Stomach (tissue), 19 donors: ENCODE measurements at regions of chr11 and their contacts with region 1.

Region 1: DNA sequence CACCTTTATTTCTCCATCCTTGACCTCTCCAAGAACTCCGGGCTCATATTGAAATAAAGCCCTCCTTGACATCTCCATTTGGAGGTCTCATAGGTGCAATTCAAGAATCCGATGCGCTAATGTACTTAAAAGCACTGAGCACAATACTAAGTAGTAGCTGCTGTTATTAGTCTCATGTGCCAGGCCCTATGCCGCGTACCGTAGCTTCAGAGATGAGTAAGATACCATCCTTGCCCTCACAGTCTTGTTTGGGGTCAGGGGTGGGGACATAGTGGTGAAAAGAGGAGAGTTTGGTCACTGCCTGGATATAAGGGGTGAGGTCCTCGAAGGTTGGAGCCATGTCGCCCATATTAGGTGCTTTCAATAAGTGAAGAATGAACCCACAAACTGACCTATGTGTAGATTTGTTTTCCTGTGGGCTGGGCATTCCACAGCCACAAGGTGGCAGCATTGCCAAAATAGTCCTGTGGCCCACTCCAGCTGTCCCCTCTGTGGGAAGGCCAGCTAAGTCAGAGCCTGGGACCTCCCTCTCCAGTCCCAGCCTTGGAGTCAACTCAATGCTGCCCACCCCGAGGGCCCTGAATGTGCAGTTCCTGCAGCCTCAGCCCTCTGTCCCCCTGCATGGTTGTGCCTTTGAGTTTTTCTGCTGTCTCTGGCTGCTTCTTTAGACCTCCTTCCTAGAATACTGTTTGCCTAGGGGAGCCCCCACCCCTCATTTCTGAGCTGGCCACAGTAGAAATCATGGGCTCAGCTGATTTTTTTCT is 6.5 kb downstream of the DCPS start:
- DNase-seq: peak; percentile 74 to 91
- H3K4me3 ChIP-seq: no peak overlapping the region
- H3K27ac ChIP-seq: peak overlapping the region in 2 of 5 donors; percentile 17 to 61
- H3K4me1 ChIP-seq: peaks cover 9 to 39% (median 14%) of the 10 kb centered on the region in 4 donors
- H3K27me3 ChIP-seq: no peaks in the 10 kb centered on the region
- CTCF ChIP-seq: peak in 5 of 7 experiments; percentile 68 to 83 (median 76)
- EP300 ChIP-seq: no peak
- POLR2A ChIP-seq: no peak

Region 2: DNA sequence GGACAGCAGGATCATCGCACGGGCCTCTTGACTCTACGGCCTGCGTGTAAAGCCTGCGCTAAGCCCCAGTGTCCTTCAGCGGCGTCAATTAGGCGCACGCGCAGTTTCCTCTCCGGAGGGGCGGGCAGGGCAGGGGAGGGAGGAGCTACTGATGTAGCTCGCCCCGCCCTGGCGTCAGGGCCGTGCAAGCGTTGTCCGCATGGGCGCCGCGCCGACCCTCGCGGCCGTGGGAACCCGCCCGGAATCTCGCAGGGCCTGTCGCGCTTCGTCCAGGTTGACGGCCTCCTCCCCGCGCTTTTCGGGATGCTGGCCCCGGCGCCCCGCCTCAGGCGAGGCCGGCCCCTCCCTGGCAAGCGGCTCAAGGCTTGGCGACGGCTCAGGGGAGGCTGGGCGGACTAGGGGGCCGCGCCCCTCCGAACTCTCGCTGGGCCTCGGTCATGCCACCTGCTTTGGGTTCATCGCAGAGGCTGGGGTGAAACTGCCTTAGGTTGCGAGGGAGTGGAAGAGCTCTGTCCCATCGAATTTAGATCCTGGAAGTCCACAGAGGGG is 106.2 kb after region 1 on chr11:
- intact Hi-C with region 1: loop called (anchors 10 kb)
- DNase-seq: peak; percentile 88 to 96
- H3K4me3 ChIP-seq: peak overlapping the region; percentile 48 to 54 (median 50)
- H3K27ac ChIP-seq: peak overlapping the region; percentile 62 to 90 (median 78)
- H3K4me1 ChIP-seq: peaks cover 28 to 62% (median 49%) of the 10 kb centered on the region in 4 donors
- H3K27me3 ChIP-seq: no peaks in the 10 kb centered on the region
- CTCF ChIP-seq: no peak
- EP300 ChIP-seq: no peak
- POLR2A ChIP-seq: no peak

Region 3: DNA sequence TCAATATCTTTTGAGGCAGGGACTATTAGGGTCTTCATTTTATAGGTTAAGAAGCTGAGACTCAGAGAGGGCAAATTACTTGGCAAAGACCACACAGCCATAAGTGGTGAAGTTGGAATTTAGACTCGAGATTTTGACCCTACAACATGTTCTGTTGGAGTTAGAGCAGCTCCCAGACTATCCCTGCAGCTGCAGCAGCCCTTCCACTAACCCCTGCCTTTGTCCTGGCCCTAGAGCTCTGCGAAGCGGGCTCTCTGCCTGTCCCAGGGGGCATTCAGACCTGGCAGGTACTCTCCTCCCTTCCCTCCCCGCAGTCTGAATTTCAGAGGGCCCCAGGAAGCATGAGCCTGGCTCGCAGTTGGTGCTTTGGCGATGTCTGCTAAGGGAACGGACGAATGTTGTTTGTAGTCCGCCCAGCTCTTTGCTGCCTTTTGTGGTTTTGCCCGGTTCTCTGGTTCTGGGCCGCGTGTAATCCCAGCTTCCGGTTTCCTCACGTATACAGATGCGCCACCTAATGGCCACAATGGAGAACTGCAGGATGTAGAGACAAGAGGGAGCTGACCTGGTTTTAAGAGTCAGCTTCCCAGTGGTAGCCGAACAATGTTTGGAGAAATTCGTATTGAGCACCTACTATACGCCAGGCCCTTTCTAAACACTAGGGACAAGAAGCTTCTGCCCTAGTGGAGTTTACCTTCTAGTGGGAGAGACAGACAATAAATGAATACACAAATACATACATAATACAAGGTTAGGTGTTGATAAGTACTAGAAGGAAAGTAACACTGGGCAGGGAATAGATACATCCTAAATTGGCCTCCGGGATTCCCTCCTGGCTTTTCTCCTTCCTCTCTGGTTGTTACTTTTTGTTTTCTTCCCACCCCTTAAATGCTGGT is 170.2 kb after region 1 on chr11:
- intact Hi-C with region 1: loop called (anchors 5 kb)
- DNase-seq: peak; percentile 85 to 95
- H3K4me3 ChIP-seq: no peak overlapping the region
- H3K27ac ChIP-seq: peak overlapping the region in 4 of 5 donors; percentile 13 to 63 (median 44)
- H3K4me1 ChIP-seq: peaks cover 4 to 7% (median 5%) of the 10 kb centered on the region in 4 donors
- H3K27me3 ChIP-seq: peaks cover 0 to 8% (median 0%) of the 10 kb centered on the region in 3 donors
- CTCF ChIP-seq: peak in 6 of 7 experiments; percentile 82 to 98 (median 96)
- EP300 ChIP-seq: no peak
- POLR2A ChIP-seq: no peak